Dorsolateral prefrontal cortex (tissue), 120 donors: ENCODE measurements at regions of chr11 and their contacts with region 1.

Region 1: GRCh38 chr11:67468835-67469811 is at the start of gene TMEM134:
- DNase-seq: peak; percentile 86 to 97 (median 94)
- H3K4me3 ChIP-seq: peak within 1 kb of the TSS; percentile 72 to 99 (median 93)
- H3K27ac ChIP-seq: peak within 1 kb of the TSS; percentile 74 to 99 (median 94)
- H3K27me3 ChIP-seq: no peaks in the 10 kb centered on the region
- CTCF ChIP-seq: peak in 54 of 56 donors; percentile 19 to 74 (median 60)
- total RNA-seq, gene TMEM134: 21.2 to 62.4 (median 41.3) TPM

Region 2: DNA sequence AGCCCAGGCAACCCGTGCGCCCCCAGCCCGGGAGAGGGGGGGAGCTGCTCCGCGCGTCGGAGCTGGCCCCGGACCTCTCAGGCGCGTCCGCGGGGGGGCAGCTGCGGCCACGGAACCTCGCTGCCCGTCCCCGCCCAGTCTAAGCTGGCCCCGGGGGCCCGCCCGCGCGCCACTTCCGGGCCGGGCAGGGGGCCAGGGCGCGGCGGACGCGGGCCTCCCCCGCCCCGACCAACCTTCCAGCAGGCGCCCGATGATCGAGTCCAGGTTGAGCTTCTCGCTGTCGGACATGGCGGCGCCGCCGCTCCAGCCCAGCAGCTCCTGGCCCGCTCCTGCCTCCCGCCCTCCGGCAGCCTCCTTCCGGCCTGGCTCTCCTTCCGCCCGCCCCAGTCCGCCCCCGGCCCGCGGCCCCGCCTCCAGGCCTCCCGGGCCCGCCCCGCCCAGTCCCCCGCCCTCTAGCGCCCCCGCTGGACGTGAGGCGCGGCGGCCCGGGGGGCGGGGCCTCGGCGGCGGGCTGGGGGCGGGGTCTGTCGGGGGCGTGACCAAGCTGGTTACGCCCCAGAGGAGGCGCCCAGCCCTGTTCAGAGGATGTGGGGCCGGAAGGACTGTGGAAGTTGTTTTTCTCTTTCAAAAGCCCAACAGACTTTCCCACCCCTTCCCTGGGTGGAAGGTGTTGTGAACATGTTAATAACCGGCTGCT is 67.5 kb before region 1 on chr11 and contains the start of gene PPP1CA:
- intact Hi-C with region 1: loop called (anchors 5 kb)
- DNase-seq: peak; percentile 83 to 95 (median 90)
- H3K4me3 ChIP-seq: peak within 1 kb of the TSS; percentile 64 to 100 (median 95)
- H3K27ac ChIP-seq: peak within 1 kb of the TSS; percentile 82 to 100 (median 96)
- H3K27me3 ChIP-seq: no peaks in the 10 kb centered on the region
- CTCF ChIP-seq: peak in 49 of 56 donors; percentile 8 to 75 (median 40)
- total RNA-seq, gene PPP1CA: 47.4 to 86.5 (median 66.9) TPM

Region 3: DNA sequence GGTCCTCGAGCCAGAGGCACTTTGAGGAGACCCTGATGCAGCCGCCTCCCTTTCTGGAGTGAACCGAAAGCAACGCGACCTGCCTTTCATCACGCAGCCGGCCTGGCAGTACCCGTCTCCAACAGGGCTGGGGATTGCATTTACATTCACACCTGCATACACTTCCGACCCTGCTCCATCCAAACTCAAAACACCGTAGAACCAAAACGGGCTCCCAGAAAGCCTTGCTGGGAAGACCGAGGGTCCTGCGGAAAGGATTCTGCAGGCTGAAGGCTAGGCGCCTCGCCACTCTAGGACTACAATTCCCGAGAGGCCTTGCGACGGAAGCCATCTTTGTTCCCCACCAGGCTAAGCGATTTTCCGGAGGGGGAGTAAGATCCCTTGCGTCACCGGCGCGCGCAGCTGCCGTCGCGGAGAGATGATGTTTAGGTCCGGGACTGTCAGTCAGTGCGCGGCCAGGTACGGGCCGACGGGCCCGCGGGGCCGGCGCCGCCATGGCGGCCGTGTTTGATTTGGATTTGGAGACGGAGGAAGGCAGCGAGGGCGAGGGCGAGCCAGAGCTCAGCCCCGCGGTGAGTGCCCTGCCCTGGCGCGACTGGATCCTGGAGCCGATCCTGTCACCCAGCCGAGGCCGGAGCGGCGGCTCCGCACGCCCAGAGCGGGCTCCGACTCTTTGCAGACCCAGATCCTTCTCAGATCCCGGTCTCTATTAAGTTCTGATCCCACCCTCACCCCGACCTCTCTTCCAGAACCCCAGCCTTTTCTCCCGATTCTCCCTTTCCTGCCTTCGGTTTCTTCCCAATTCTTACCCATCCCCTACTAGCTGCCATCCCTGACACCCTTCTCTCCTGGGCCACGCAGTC is 40.8 kb before region 1 on chr11 and contains the start of gene RPS6KB2:
- intact Hi-C with region 1: loop called (anchors 5 kb)
- DNase-seq: peak; percentile 97 to 100 (median 99)
- H3K4me3 ChIP-seq: peak within 1 kb of the TSS; percentile 55 to 99 (median 92)
- H3K27ac ChIP-seq: peak within 1 kb of the TSS; percentile 52 to 99 (median 95)
- H3K27me3 ChIP-seq: no peaks in the 10 kb centered on the region
- CTCF ChIP-seq: peak in 39 of 56 donors; percentile 9 to 63 (median 31)
- total RNA-seq, gene RPS6KB2: 13.4 to 47.4 (median 28.2) TPM

Region 4: DNA sequence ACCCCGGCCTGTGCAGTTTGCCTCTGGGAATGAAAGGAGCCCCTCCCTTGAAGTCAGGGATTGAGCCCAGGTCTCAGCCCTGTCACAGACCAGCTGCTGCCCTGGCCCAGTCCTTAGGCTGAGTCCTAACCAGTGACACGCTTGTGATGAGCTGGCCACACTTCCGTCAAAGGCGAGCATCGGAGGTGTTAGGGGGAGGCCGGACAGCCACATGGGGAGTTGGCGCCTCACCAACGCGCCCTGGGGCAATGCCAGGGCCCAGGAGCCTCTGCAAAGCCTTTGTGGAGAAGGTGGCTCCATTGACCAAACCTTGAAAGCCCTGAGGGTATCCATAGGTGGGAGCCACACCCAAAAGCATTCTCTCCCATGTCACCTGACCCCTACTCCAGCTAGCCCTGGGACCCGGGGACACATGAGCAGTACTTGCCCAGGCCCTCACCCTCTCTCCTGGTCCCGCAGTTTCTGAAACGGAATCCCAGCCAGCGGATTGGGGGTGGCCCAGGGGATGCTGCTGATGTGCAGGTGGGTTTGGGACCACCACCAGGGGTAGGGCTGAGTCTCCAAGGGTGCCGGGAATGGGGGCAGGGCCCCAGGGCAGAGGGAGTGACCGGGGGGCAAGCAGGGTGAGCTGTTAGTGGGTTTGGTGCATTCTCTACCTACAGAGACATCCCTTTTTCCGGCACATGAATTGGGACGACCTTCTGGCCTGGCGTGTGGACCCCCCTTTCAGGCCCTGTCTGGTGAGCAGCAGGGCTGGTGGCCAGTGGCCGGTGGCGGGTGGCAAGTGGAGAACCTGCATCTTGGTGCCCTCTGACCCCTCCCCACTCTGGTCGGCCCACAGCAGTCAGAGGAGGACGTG is 35.4 kb before region 1 on chr11:
- intact Hi-C with region 1: loop called (anchors 5 kb)
- DNase-seq: no peak
- H3K4me3 ChIP-seq: no peak overlapping the region
- H3K27ac ChIP-seq: no peak overlapping the region
- H3K27me3 ChIP-seq: no peaks in the 10 kb centered on the region
- CTCF ChIP-seq: no peak

Region 5: DNA sequence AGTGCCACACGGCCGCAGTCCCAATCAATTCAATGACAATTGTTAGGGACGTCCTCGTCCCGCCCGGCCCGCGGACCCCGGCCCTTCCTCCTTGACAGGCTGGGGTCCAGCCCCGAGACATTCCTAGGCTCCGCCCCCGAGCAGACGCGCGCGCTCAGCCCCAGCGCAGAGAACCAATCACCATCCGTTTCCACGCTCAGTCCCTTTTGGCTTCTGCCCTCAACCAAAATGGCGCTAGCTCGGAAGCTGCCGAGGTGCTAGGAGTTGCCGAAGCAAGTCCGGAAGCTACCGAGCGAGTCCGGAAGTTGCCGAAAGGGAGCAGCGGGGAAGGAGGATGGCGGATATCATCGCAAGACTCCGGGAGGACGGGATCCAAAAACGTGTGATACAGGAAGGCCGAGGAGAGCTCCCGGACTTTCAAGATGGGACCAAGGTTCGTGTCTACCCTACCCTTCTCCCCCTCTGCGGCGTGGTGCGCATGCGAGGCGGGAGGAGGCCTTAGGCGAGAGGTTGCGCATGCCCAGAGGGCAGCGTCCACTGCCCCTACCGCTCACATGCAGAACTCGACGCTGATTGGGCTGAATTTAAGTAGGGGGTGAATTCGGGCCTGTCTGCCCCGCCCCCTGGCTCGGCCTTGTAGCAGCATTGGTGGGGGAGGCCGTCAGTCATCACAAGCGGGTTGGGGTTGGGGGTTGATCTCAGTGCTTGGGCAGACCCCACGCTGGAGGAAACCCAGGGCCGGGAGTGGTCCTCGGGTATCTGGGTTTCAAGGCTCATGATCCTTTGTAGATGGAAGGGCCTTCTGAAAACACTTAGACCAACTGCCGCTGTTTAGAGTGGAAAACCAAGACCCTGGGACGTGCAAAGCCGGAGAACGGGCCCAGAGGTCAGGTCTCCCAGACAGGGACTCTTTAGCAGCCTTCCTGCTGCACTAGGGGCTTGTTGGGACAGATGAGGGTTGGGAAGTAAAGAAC is 14.0 kb after region 1 on chr11 and contains the start of gene AIP:
- intact Hi-C with region 1: loop called (anchors 1 to 2 kb)
- DNase-seq: peak; percentile 87 to 97 (median 96)
- H3K4me3 ChIP-seq: peak within 1 kb of the TSS; percentile 53 to 85 (median 69)
- H3K27ac ChIP-seq: peak within 1 kb of the TSS; percentile 86 to 99 (median 96)
- H3K27me3 ChIP-seq: no peaks in the 10 kb centered on the region
- CTCF ChIP-seq: peak in 36 of 56 donors; percentile 6 to 49 (median 28)
- total RNA-seq, gene AIP: 51.6 to 82.9 (median 65.8) TPM